Activated naive CD4-positive, alpha-beta T cell treated with anti-CD3 and anti-CD28 coated beads for 36 hours (primary cell): ENCODE measurements at regions of chr19 and their contacts with region 1.

Region 1: GRCh38 chr19:11482384-11483050 is 1.7 kb upstream of the ELAVL3 start:
- DNase-seq: peak; percentile 90
- H3K4me3 Mint-ChIP-seq: peak overlapping the region; percentile 72
- H3K27ac Mint-ChIP-seq: peak overlapping the region; percentile 36
- H3K4me1 Mint-ChIP-seq: peaks cover 16% of the 10 kb centered on the region
- H3K27me3 Mint-ChIP-seq: peaks cover 30% of the 10 kb centered on the region

Region 2: GRCh38 chr19:11293433-11294389 is 188.8 kb before region 1 on chr19:
- CTCF ChIA-PET with region 1: no interaction called
- intact Hi-C with region 1: loop called (anchors 1 kb)
- DNase-seq: peak; percentile 90
- H3K4me3 Mint-ChIP-seq: peak overlapping the region; percentile 66
- H3K27ac Mint-ChIP-seq: no peak overlapping the region
- H3K4me1 Mint-ChIP-seq: peaks cover 9% of the 10 kb centered on the region
- H3K27me3 Mint-ChIP-seq: peaks cover 8% of the 10 kb centered on the region

Region 3: GRCh38 chr19:11380653-11381534 is 101.6 kb before region 1 on chr19:
- CTCF ChIA-PET with region 1: interaction called, 21 read pairs
- intact Hi-C with region 1: loop called (anchors 1 kb)
- DNase-seq: peak; percentile 98
- H3K4me3 Mint-ChIP-seq: peak overlapping the region; percentile 85
- H3K27ac Mint-ChIP-seq: peak overlapping the region; percentile 92
- H3K4me1 Mint-ChIP-seq: peaks cover 52% of the 10 kb centered on the region
- H3K27me3 Mint-ChIP-seq: peaks cover 8% of the 10 kb centered on the region

Region 4: DNA sequence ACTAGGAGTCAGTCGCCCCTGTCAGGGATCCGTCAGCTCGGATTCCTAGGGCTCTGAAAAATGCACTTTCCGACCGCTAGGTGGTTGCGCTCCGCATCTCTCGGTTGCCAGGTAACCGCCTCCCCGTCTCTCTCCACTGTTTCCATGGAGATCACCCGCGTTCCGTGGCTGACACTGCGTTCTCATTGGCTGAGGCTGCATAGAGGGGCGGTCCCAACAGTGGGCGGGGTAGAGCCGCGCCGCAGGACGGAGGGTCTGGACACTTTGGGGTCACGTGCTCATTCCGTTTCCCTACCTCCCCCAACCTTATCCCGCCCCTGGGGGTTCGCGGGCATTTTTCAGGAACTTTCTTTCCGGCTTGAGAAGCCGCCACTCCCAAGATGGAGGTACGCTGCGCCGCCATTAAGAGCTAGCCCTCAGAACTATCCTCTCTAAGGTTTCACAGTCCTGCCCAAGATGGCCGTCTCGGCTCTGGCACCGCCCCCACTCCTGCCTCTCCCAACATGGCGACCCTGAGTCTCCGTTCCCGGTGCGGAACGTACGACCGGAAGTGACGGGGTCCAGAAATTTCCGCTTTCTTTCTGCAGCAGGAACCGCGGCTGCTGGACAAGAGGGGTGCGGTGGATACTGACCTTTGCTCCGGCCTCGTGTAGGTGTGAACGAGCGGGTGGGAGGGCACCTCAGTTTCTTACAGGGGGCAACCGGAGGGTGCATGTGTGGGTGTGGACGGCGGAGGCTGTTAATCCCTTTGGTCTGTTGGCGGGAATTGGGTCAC is 47.3 kb before region 1 on chr19 and contains the starts of genes ODAD3 and PRKCSH:
- CTCF ChIA-PET with region 1: no interaction called
- intact Hi-C with region 1: loop called (anchors 1 kb)
- DNase-seq: peak; percentile 99
- H3K4me3 Mint-ChIP-seq: peak within 1 kb of the TSS; percentile 100
- H3K27ac Mint-ChIP-seq: peak within 1 kb of the TSS; percentile 93
- H3K4me1 Mint-ChIP-seq: peaks cover 22% of the 10 kb centered on the region
- H3K27me3 Mint-ChIP-seq: no peaks in the 10 kb centered on the region
- total RNA-seq, gene ODAD3: 0.15 to 0.19 TPM
- total RNA-seq, gene PRKCSH: 234 to 237 TPM

Region 5: DNA sequence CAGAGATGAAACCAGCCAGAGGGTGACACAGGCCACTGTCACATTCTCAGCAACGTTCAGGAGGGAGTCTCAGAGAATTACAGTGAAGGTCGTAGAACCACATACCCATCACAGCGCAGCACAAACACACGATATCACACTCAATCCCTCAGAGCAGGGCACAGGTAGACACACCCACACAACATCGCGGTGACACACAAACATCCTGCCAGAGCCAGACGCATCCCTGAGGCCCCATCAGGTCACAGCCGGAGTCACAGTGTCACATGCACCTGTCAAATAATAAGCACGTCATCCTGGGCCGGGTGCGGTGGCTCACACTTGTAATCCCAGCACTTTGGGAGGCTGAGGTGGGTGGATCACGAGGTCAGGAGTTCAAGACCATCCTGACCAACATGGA is 19.1 kb before region 1 on chr19:
- CTCF ChIA-PET with region 1: interaction called, 10 read pairs
- intact Hi-C with region 1: no loop called
- DNase-seq: no peak
- H3K4me3 Mint-ChIP-seq: no peak overlapping the region
- H3K27ac Mint-ChIP-seq: no peak overlapping the region
- H3K4me1 Mint-ChIP-seq: no peaks in the 10 kb centered on the region
- H3K27me3 Mint-ChIP-seq: peaks cover 3% of the 10 kb centered on the region

Region 6: GRCh38 chr19:11587302-11587974 is 104.9 kb after region 1 on chr19:
- CTCF ChIA-PET with region 1: interaction called, 3 read pairs
- intact Hi-C with region 1: loop called (anchors 5 kb)
- DNase-seq: peak; percentile 90
- H3K4me3 Mint-ChIP-seq: no peak overlapping the region
- H3K27ac Mint-ChIP-seq: no peak overlapping the region
- H3K4me1 Mint-ChIP-seq: peaks cover 5% of the 10 kb centered on the region
- H3K27me3 Mint-ChIP-seq: no peaks in the 10 kb centered on the region